HepG2 (cell line): ENCODE measurements at regions of chr18 and their contacts with region 1.

Region 1: DNA sequence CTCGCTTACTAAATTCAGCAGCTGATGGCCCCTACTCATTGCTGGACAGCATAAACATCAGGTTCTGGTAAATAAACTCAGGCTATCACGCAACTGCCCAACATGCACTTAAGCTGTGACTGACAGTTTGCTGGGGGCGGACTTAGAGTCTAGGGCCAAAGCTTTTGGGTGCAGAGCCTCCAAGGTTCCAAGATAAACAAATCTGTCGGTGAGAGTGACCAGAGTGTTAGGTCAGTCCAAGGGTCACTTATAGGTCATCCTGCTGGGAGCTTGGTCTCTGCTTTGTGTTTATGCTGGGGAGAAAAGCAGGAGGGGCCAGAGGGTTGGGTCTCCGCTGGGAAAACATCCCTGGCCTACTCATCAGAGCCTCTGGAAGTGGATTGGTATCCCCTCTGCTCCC is 188.6 kb upstream of the GATA6 start:
- DNase-seq: peak; percentile 97
- ATAC-seq: peak; percentile 98
- H3K4me3 ChIP-seq: peak overlapping the region in 1 of 3 experiments; percentile 3; a peak in 1 of 6 replicates
- H3K27ac ChIP-seq: no peak overlapping the region
- H3K4me1 ChIP-seq: peaks cover 40% of the 10 kb centered on the region
- H3K27me3 ChIP-seq: no peaks in the 10 kb centered on the region
- CTCF ChIP-seq: peak; percentile 18; the same call in 1 of the 2 replicates
- EP300 ChIP-seq: peak in 1 of 2 experiments; percentile 69; a peak in 2 of 4 replicates
- POLR2A ChIP-seq: no peak
- RAD21 ChIP-seq: no peak

Region 2: GRCh38 chr18:22032392-22032961 is 51.7 kb after region 1 on chr18:
- CTCF ChIA-PET with region 1: no interaction called
- POLR2A ChIA-PET with region 1: no interaction called
- in situ Hi-C with region 1: no loop called
- intact Hi-C with region 1: loop called (anchors 10 kb)
- DNase-seq: peak; percentile 79
- ATAC-seq: no peak
- H3K4me3 ChIP-seq: no peak overlapping the region
- H3K27ac ChIP-seq: no peak overlapping the region
- H3K4me1 ChIP-seq: peaks cover 14% of the 10 kb centered on the region
- H3K27me3 ChIP-seq: no peaks in the 10 kb centered on the region
- CTCF ChIP-seq: no peak
- EP300 ChIP-seq: no peak
- POLR2A ChIP-seq: no peak
- RAD21 ChIP-seq: no peak